ENCODE measurements at regions of chr14 and their contacts with region 1.

Region 1: GRCh38 chr14:93892923-93893558 is 34.1 kb upstream of the FAM181A start:
- DNase-seq: peak; percentile 74
- H3K4me3 Mint-ChIP-seq: no peak overlapping the region
- H3K27ac Mint-ChIP-seq: no peak overlapping the region
- H3K4me1 Mint-ChIP-seq: peaks cover 20% of the 10 kb centered on the region
- H3K27me3 Mint-ChIP-seq: peaks cover 32% of the 10 kb centered on the region
- CTCF ChIP-seq: peak; percentile 96

Region 2: DNA sequence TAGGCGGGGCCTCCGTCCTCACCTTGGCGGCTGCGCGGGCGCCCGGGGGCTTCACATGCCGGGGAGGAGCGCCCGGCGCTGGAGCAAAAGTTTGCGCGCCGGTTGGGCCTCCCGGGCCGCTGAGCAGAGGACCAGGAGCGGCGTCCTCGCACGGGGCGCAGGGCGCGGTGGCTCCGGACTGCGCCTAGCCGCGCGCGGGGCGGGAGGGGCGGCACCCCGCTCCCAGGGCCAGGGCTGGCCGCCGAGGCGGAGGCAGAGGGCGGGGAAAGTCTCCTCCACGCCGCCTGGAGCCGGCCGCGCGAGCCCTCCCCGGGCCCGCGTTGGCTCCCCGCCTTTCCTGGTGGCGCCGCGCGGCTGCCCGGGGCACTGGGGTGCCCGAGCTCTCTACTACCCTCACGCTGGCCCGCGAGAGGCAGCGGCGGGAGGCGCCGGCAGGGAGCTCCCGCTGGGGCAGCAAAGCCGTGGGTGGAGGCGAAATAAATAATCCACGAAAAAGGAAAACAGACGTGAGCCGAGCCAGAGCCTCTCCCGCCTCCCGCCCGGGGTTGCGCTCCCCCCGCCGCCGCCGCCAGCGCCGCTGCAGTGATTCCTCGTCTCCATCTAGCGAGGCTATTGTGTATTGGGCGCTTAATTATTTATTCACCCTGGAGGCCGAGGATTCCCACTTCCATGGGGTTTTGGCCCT is 104.4 kb before region 1 on chr14:
- CTCF ChIA-PET with region 1: no interaction called
- POLR2A ChIA-PET with region 1: no interaction called
- intact Hi-C with region 1: loop called (anchors 10 kb)
- DNase-seq: peak; percentile 42
- H3K4me3 Mint-ChIP-seq: peak overlapping the region; percentile 56
- H3K27ac Mint-ChIP-seq: no peak overlapping the region
- H3K4me1 Mint-ChIP-seq: no peaks in the 10 kb centered on the region
- H3K27me3 Mint-ChIP-seq: no peaks in the 10 kb centered on the region
- CTCF ChIP-seq: peak; percentile 48

Region 3: DNA sequence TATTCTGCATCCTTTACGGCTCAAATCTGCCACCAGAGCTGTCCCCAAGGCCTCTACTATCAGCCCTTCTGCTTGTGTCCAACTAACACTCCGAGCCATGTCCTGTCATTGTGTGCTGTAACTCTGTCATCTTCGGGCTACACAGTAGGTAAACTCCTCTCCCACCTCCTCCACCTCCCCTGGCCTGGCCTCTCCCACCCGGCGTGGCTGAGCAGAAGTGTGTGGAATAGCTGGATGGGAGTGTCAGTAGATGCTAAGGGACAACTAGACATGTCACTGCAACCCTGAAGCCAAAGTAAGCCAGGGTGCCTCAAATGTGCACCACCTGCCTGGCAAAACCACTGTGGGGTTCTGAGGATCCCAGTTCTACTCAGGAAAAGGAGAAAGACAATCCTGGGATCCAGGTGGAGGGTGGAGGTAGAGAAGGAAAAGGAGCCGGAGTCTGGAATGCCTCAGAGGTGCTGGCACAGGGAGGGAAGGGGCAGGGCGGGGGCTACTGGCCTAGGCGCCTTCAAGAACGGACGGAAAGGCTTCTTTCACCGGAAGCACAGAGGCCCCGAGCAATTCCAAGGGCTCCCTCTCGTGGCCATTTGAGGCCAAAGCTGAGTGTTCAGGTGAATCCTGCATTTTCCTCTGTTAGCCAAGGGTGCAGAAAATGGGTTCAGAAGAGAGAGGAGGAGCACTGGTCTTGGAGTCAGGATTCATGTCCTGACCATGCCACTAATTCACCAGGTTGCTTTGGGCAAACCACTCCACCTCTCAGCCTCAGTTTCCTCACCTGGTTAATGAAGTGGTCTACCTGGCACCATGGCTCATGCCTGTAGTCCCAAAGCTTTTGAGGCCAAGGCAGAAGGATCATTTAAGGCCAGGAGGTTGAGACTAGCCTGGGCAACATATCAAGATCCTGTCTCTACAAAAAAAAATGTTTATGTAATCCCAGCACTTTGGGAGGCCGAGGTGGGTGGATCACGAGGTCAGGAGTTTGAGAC is 13.6 kb after region 1 on chr14:
- CTCF ChIA-PET with region 1: interaction called, 11 read pairs
- POLR2A ChIA-PET with region 1: no interaction called
- intact Hi-C with region 1: no loop called
- DNase-seq: peak; percentile 83
- H3K4me3 Mint-ChIP-seq: no peak overlapping the region
- H3K27ac Mint-ChIP-seq: no peak overlapping the region
- H3K4me1 Mint-ChIP-seq: no peaks in the 10 kb centered on the region
- H3K27me3 Mint-ChIP-seq: peaks cover 54% of the 10 kb centered on the region
- CTCF ChIP-seq: peak; percentile 79